ENCODE measurements at regions of chr16 and their contacts with region 1.

Region 1: DNA sequence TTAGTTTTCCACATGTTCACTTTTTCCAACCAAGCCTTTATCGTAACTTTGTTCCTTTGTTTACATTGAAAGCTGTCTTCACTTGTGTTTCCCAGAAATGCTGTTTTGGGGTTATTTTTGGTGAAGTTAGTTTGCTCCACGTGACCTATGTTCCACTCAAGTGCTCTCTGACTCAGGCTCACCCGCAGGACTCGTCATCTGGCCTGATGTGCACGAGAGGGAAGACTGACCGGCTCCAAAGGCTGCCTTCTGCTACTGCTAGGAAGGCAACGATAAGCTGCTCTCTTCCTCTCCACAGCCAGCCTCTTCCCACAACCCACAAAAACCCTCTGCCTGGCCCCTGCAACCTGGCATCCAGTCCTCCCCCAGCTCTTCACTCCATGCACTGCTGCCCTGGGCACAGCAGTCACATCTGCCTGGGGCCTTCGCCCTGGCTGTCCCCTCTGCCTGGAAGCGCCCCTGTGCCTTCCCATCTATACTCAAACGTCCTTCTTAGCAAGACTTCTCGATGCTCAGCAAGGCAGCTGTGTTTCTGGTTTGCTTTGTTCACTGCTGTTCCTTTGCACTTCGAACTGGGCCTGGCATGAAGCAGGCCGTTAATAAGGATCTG is 28.0 kb downstream of the ZCCHC14 start:
- DNase-seq: peak; percentile 96
- ATAC-seq: peak; percentile 94
- H3K4me3 ChIP-seq: no peak overlapping the region
- H3K27ac ChIP-seq: peak overlapping the region; percentile 90
- H3K4me1 ChIP-seq: peaks cover 23% of the 10 kb centered on the region
- H3K27me3 ChIP-seq: no peaks in the 10 kb centered on the region
- CTCF ChIP-seq: no peak
- POLR2A ChIP-seq: peak; percentile 73
- RAD21 ChIP-seq: no peak; the same call in 1 of the 2 replicates

Region 2: GRCh38 chr16:87431926-87432325 is 32.9 kb before region 1 on chr16:
- CTCF ChIA-PET with region 1: no interaction called
- POLR2A ChIA-PET with region 1: no interaction called
- dilution Hi-C with region 1: no loop called
- in situ Hi-C with region 1: no loop called
- intact Hi-C with region 1: loop called (anchors 5 kb)
- DNase-seq: peak; percentile 94
- ATAC-seq: peak; percentile 75
- H3K4me3 ChIP-seq: no peak overlapping the region
- H3K27ac ChIP-seq: no peak overlapping the region
- H3K4me1 ChIP-seq: peaks cover 22% of the 10 kb centered on the region
- H3K27me3 ChIP-seq: no peaks in the 10 kb centered on the region
- CTCF ChIP-seq: no peak
- POLR2A ChIP-seq: no peak
- RAD21 ChIP-seq: no peak; the same call in 1 of the 2 replicates